Caco-2 (cell line): ENCODE measurements at regions of chr7 and their contacts with region 1.

Region 1: GRCh38 chr7:47529838-47530555 is 51.9 kb downstream of the TNS3 start:
- DNase-seq: no peak
- H3K4me3 ChIP-seq: no peak overlapping the region
- H3K4me3 Mint-ChIP-seq: no peak overlapping the region
- H3K27ac Mint-ChIP-seq: no peak overlapping the region
- H3K4me1 ChIP-seq: peaks cover 45% of the 10 kb centered on the region
- H3K4me1 Mint-ChIP-seq: peaks cover 19% of the 10 kb centered on the region
- H3K27me3 ChIP-seq: no peaks in the 10 kb centered on the region
- H3K27me3 Mint-ChIP-seq: no peaks in the 10 kb centered on the region
- CTCF ChIP-seq: no peak

Region 2: DNA sequence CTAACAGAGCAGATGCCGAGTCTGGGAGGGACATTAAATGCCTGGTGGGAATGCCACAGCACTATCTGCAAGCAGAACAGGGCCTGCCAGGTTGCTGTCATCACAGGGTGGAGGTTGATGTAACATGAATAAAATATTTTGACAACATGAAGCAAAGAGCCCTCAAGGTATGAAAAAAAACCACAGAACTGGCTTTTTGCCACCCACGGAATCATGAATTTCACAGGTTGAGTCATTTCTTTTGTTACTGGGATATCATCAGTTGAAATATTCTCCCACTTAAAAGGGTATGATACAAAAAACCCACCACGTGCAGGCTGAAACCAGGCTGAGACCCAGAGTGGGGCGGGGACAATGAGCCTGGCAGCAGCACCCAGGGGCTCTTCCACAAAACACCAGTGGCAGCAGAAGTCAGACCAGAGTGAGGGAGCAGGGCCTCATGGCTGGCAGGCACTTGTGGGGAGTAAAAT is 168.2 kb before region 1 on chr7:
- CTCF ChIA-PET with region 1: no interaction called
- POLR2A ChIA-PET with region 1: interaction called, 11 read pairs
- intact Hi-C with region 1: no loop called
- DNase-seq: no peak
- H3K4me3 ChIP-seq: no peak overlapping the region
- H3K4me3 Mint-ChIP-seq: no peak overlapping the region
- H3K27ac Mint-ChIP-seq: no peak overlapping the region
- H3K4me1 ChIP-seq: no peaks in the 10 kb centered on the region; the same call in none of the 2 replicates
- H3K4me1 Mint-ChIP-seq: no peaks in the 10 kb centered on the region
- H3K27me3 ChIP-seq: no peaks in the 10 kb centered on the region
- H3K27me3 Mint-ChIP-seq: no peaks in the 10 kb centered on the region
- CTCF ChIP-seq: no peak

Region 3: DNA sequence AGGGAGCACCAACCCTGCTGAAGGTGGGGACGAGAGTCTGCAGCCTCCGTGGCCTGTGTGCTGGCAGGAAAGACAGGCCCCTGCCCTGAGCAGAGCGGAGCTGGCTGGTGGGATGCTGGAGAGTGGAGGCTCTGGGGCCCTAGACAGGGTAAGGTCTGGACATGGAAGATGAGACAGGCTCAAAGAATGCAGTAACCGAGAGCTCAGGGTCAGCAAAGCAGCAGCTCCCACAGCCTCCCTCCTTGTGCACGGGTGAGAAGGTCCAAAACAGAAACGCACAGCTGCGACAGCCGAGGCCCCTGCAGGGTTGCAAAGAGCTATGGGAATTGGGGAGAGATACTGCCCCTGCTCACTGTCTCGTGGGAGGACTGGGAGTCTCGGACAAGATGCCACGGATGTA is 28.6 kb before region 1 on chr7:
- CTCF ChIA-PET with region 1: no interaction called
- POLR2A ChIA-PET with region 1: no interaction called
- intact Hi-C with region 1: no loop called
- DNase-seq: no peak
- H3K4me3 ChIP-seq: no peak overlapping the region
- H3K4me3 Mint-ChIP-seq: no peak overlapping the region
- H3K27ac Mint-ChIP-seq: no peak overlapping the region
- H3K4me1 ChIP-seq: peaks cover 57% of the 10 kb centered on the region
- H3K4me1 Mint-ChIP-seq: peaks cover 49% of the 10 kb centered on the region
- H3K27me3 ChIP-seq: no peaks in the 10 kb centered on the region
- H3K27me3 Mint-ChIP-seq: no peaks in the 10 kb centered on the region
- CTCF ChIP-seq: no peak

Region 4: GRCh38 chr7:47557169-47557985 is 27.4 kb after region 1 on chr7:
- CTCF ChIA-PET with region 1: no interaction called
- POLR2A ChIA-PET with region 1: no interaction called
- intact Hi-C with region 1: no loop called
- DNase-seq: no peak
- H3K4me3 ChIP-seq: no peak overlapping the region
- H3K4me3 Mint-ChIP-seq: peak overlapping the region; percentile 37
- H3K27ac Mint-ChIP-seq: peak overlapping the region; percentile 92
- H3K4me1 ChIP-seq: peaks cover 81% of the 10 kb centered on the region
- H3K4me1 Mint-ChIP-seq: peaks cover 61% of the 10 kb centered on the region
- H3K27me3 ChIP-seq: no peaks in the 10 kb centered on the region
- H3K27me3 Mint-ChIP-seq: no peaks in the 10 kb centered on the region
- CTCF ChIP-seq: no peak

Region 5: DNA sequence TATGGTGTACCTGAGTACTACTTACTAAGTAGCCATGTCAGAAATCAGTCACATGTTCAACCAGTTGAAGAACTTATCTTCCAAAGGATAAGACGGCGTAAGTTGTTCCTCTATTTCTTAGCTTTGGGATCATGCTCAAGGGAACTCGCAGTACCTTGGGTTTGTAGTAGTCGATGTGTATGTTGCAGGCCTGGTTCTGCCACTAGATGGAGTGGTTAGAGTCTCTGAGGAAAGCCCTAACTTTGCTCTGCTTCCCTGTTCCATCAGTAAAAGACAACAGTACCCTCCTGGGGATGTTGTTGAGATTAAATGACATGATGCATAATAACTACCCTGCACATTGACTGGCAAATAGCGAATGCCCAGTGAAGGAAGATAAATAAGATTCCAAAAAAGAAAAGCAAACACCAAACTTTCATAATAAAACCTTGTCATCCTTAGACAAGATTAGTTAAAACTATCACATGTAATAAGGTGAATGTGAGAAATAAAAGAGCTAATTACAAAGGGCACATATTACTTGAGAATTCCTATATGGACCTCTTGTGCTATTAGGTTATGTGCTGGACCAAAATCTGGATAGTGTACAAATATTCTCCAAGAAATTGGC is 807.1 kb after region 1 on chr7:
- CTCF ChIA-PET with region 1: no interaction called
- POLR2A ChIA-PET with region 1: no interaction called
- intact Hi-C with region 1: no loop called
- DNase-seq: peak in 1 of 2 experiments; percentile 33
- H3K4me3 ChIP-seq: no peak overlapping the region
- H3K4me3 Mint-ChIP-seq: no peak overlapping the region
- H3K27ac Mint-ChIP-seq: no peak overlapping the region
- H3K4me1 ChIP-seq: no peaks in the 10 kb centered on the region
- H3K4me1 Mint-ChIP-seq: no peaks in the 10 kb centered on the region
- H3K27me3 ChIP-seq: no peaks in the 10 kb centered on the region
- H3K27me3 Mint-ChIP-seq: peaks cover 14% of the 10 kb centered on the region
- CTCF ChIP-seq: peak; percentile 53 to 77